Activated CD4-positive, alpha-beta T cell treated with anti-CD3 and anti-CD28 coated beads, Interleukin-2, amount 10 ng/mL, durations not matched to agents 7 days and 5 days (primary cell): ENCODE measurements at regions of chr1 and their contacts with region 1.

Region 1: DNA sequence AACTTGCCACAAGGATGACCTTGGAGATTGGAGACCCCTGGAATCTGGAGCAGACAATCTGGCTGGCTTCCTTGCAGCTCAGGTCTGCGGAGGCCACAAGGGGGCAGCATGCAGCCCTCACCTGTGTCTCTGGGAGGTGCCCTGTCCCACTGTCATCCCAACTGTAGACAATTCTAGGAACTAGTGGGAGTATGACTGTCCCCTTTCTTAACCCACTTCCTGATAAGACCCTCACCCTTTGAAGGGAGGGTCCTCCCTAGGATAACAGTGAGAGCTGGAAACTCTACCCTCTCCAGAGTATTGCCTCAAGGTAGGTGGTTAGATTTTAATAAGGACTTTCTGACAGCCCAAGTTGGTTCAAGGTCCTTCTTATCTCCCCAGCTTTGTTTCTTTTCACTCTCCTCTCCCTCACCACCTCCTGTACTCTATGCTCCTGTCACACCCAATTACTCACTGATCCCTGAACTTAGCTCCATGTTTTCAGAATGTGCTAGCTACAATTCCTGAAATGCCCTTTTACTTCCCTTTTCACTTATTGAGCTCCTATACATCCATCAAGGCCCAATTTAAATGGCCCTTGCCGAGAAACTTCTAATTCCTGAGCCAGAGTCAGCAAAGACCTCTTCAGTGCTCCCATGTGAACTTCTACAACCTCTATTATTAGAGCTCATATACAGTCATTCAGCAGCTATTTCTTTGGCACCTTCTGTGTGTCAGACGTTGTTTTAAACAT is 9.2 kb upstream of the KCNQ4 start:
- DNase-seq: peak; percentile 60
- H3K4me3 Mint-ChIP-seq: no peak overlapping the region
- H3K27ac Mint-ChIP-seq: no peak overlapping the region
- H3K4me1 Mint-ChIP-seq: peaks cover 26% of the 10 kb centered on the region
- H3K27me3 Mint-ChIP-seq: no peaks in the 10 kb centered on the region

Region 2: GRCh38 chr1:40478276-40478675 is 296.2 kb before region 1 on chr1:
- CTCF ChIA-PET with region 1: no interaction called
- POLR2A ChIA-PET with region 1: no interaction called
- DNase-seq: no peak
- H3K4me3 Mint-ChIP-seq: peak overlapping the region; percentile 71
- H3K27ac Mint-ChIP-seq: peak overlapping the region; percentile 43
- H3K4me1 Mint-ChIP-seq: peaks cover 18% of the 10 kb centered on the region
- H3K27me3 Mint-ChIP-seq: no peaks in the 10 kb centered on the region

Region 3: DNA sequence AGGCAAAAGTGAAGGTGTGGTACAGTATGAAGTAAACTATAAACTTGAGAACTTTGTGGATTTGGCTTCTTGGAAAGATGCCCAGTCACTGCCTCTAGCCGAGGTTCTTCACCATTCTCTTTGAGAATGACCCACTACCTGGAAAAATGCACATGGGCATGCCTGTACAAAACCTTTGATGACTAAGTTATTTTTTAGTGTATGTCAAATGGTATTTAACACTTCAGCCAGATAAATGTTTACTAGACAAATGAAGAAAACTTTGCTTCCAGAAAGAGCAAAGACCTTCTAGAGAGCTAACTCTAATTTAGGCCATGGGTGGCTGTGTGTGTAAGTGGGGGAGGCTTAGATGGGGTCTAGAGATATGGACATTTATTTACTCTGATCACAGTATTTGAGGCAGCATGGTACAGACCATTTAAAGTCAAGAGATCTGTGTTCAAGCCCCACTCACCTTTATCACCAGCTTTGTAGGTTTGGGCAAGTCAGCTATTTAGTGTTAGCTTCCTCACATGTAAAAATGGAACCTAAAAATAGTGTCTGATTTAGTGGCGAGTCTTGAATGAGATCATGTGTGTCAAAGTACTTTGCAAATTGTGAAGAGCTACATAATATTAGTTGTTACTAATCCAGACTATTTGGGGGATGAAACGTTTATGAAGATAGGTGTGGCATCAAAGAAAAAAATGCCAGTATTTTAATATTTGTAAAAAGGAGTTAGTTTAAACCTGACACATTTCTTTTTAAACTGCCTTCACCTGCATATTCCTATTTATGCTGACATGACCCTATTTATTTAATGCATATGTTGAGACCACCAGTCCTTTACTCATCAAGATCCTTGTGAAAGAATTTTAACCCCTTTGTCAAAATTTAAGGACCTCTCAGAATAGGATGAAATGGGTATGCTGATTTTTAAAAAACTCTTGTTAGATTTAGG is 62.7 kb before region 1 on chr1:
- CTCF ChIA-PET with region 1: no interaction called
- POLR2A ChIA-PET with region 1: no interaction called
- DNase-seq: no peak
- H3K4me3 Mint-ChIP-seq: peak overlapping the region; percentile 8
- H3K27ac Mint-ChIP-seq: peak overlapping the region; percentile 67
- H3K4me1 Mint-ChIP-seq: peaks cover 68% of the 10 kb centered on the region
- H3K27me3 Mint-ChIP-seq: no peaks in the 10 kb centered on the region

Region 4: DNA sequence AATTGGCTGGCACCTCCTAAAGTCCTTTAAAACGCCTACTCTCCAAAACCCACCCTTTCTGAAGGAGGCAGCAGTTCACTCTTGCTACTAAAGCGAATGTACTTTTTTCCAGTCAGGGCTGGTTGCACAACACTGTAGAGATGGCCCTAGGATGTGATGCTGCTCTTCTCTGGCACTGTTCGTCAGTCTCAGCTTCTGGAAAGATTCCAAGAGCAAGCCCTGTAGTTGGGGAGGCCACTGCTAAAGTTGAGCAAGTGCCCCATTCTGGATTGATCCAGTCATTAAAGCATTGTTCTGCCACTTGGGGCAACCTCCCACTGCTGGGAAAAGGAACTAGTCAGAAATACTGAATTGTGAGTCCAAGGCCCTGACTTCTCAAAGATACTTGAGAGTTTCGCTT is 19.4 kb before region 1 on chr1:
- CTCF ChIA-PET with region 1: interaction called, 30 read pairs
- POLR2A ChIA-PET with region 1: no interaction called
- DNase-seq: no peak
- H3K4me3 Mint-ChIP-seq: no peak overlapping the region
- H3K27ac Mint-ChIP-seq: no peak overlapping the region
- H3K4me1 Mint-ChIP-seq: peaks cover 21% of the 10 kb centered on the region
- H3K27me3 Mint-ChIP-seq: no peaks in the 10 kb centered on the region

Region 5: GRCh38 chr1:40786171-40786994 is 12.0 kb after region 1 on chr1:
- CTCF ChIA-PET with region 1: interaction called, 20 read pairs
- POLR2A ChIA-PET with region 1: no interaction called
- DNase-seq: no peak
- H3K4me3 Mint-ChIP-seq: no peak overlapping the region
- H3K27ac Mint-ChIP-seq: no peak overlapping the region
- H3K4me1 Mint-ChIP-seq: peaks cover 10% of the 10 kb centered on the region
- H3K27me3 Mint-ChIP-seq: peaks cover 34% of the 10 kb centered on the region

Region 6: GRCh38 chr1:40849801-40850592 is 75.6 kb after region 1 on chr1:
- CTCF ChIA-PET with region 1: interaction called, 28 read pairs
- POLR2A ChIA-PET with region 1: no interaction called
- DNase-seq: peak; percentile 85
- H3K4me3 Mint-ChIP-seq: no peak overlapping the region
- H3K27ac Mint-ChIP-seq: peak overlapping the region; percentile 64
- H3K4me1 Mint-ChIP-seq: peaks cover 27% of the 10 kb centered on the region
- H3K27me3 Mint-ChIP-seq: no peaks in the 10 kb centered on the region

Region 7: DNA sequence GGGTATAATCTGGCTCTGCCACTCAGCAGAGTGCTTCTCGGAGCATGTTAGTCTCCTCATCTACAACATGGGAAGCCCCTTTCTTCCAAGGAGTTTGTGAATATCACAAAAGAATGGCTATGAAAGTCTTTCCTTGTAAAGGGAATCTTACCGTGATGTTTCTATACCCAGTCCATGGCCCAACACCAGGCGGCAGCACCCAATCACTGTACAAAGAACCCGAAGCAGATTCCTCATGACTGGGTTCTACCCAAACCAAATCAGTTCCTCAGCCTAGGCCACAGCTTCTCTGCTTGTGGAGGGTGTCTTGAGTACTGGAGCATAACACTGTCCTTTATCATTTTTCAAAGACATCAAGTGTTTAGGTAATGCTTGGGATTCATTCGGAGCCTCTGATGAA is 263.7 kb after region 1 on chr1:
- CTCF ChIA-PET with region 1: no interaction called
- POLR2A ChIA-PET with region 1: no interaction called
- DNase-seq: no peak
- H3K4me3 Mint-ChIP-seq: no peak overlapping the region
- H3K27ac Mint-ChIP-seq: no peak overlapping the region
- H3K4me1 Mint-ChIP-seq: peaks cover 3% of the 10 kb centered on the region
- H3K27me3 Mint-ChIP-seq: no peaks in the 10 kb centered on the region